ENCODE measurements at regions of chr20 and their contacts with region 1.

Region 1: GRCh38 chr20:45373353-45374100 is 4.6 kb downstream of the TP53TG5 start:
- DNase-seq: peak; percentile 84 to 95 (median 89)
- ATAC-seq: peak; percentile 89
- H3K4me3 ChIP-seq: peak overlapping the region; percentile 63
- H3K4me3 Mint-ChIP-seq: peak overlapping the region; percentile 90
- H3K27ac ChIP-seq: peak overlapping the region; percentile 62 to 73
- H3K27ac Mint-ChIP-seq: peak overlapping the region; percentile 96
- H3K4me1 ChIP-seq: peaks cover 32% of the 10 kb centered on the region
- H3K4me1 Mint-ChIP-seq: peaks cover 46% of the 10 kb centered on the region
- H3K27me3 ChIP-seq: no peaks in the 10 kb centered on the region
- H3K27me3 Mint-ChIP-seq: no peaks in the 10 kb centered on the region
- CTCF ChIP-seq: peak; percentile 86

Region 2: DNA sequence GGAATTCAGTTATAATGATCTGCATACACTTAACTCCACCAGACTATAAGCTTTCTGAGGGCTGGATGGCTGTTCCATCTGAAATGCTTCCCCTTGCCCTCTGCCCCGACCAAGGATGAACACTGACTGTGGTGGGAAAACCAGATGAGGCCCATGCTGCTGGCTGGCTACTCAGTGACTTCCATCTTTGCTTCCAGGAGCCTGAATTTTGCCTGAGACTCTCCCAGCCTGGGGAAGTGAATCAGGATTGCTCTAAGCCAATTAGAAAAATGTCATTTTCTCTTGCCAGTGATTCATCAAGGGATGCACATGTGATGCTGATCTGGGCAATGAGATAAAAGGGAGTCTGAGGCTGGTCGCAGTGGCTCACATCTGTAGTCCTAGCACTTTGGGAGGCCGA is 411.7 kb before region 1 on chr20:
- CTCF ChIA-PET with region 1: no interaction called
- POLR2A ChIA-PET with region 1: no interaction called
- intact Hi-C with region 1: no loop called
- DNase-seq: no peak
- ATAC-seq: no peak
- H3K4me3 ChIP-seq: no peak overlapping the region
- H3K4me3 Mint-ChIP-seq: peak overlapping the region; percentile 98
- H3K27ac ChIP-seq: no peak overlapping the region
- H3K27ac Mint-ChIP-seq: no peak overlapping the region
- H3K4me1 ChIP-seq: peaks cover 44% of the 10 kb centered on the region
- H3K4me1 Mint-ChIP-seq: peaks cover 59% of the 10 kb centered on the region
- H3K27me3 ChIP-seq: no peaks in the 10 kb centered on the region
- H3K27me3 Mint-ChIP-seq: no peaks in the 10 kb centered on the region
- CTCF ChIP-seq: no peak

Region 3: GRCh38 chr20:45362804-45363610 is 10.5 kb before region 1 on chr20 and contains the start of gene SYS1:
- CTCF ChIA-PET with region 1: interaction called, 89 read pairs
- POLR2A ChIA-PET with region 1: interaction called, 184 read pairs
- intact Hi-C with region 1: loop called in 1 of 2 experiments (anchors 1 kb)
- DNase-seq: peak; percentile 97 to 100 (median 99)
- ATAC-seq: peak; percentile 86
- H3K4me3 ChIP-seq: peak within 1 kb of the TSS; percentile 96
- H3K4me3 Mint-ChIP-seq: peak within 1 kb of the TSS; percentile 91
- H3K27ac ChIP-seq: peak within 1 kb of the TSS; percentile 98 to 99
- H3K27ac Mint-ChIP-seq: peak within 1 kb of the TSS; percentile 85
- H3K4me1 ChIP-seq: peaks cover 55% of the 10 kb centered on the region
- H3K4me1 Mint-ChIP-seq: peaks cover 46% of the 10 kb centered on the region
- H3K27me3 ChIP-seq: no peaks in the 10 kb centered on the region
- H3K27me3 Mint-ChIP-seq: no peaks in the 10 kb centered on the region
- CTCF ChIP-seq: peak; percentile 92
- total RNA-seq, gene SYS1: 94.8 to 107 TPM

Region 4: GRCh38 chr20:45415774-45416637 is 42.5 kb after region 1 on chr20 and contains the start of gene PIGT:
- CTCF ChIA-PET with region 1: interaction called, 51 read pairs
- POLR2A ChIA-PET with region 1: interaction called, 60 read pairs
- intact Hi-C with region 1: loop called (anchors 2 kb)
- DNase-seq: peak; percentile 75 to 97 (median 86)
- ATAC-seq: peak; percentile 95
- H3K4me3 ChIP-seq: peak within 1 kb of the TSS; percentile 98
- H3K4me3 Mint-ChIP-seq: peak within 1 kb of the TSS; percentile 95
- H3K27ac ChIP-seq: peak within 1 kb of the TSS; percentile 81 to 88
- H3K27ac Mint-ChIP-seq: peak within 1 kb of the TSS; percentile 92
- H3K4me1 ChIP-seq: peaks cover 31% of the 10 kb centered on the region
- H3K4me1 Mint-ChIP-seq: peaks cover 49% of the 10 kb centered on the region
- H3K27me3 ChIP-seq: no peaks in the 10 kb centered on the region
- H3K27me3 Mint-ChIP-seq: no peaks in the 10 kb centered on the region
- CTCF ChIP-seq: no peak
- total RNA-seq, gene PIGT: 157 to 163 TPM

Region 5: GRCh38 chr20:45436732-45437391 is 63.3 kb after region 1 on chr20:
- CTCF ChIA-PET with region 1: interaction called, 132 read pairs
- POLR2A ChIA-PET with region 1: interaction called, 89 read pairs
- intact Hi-C with region 1: loop called (anchors 1 kb)
- DNase-seq: peak; percentile 77 to 93 (median 84)
- ATAC-seq: peak; percentile 99
- H3K4me3 ChIP-seq: peak overlapping the region; percentile 54
- H3K4me3 Mint-ChIP-seq: peak overlapping the region; percentile 86
- H3K27ac ChIP-seq: no peak overlapping the region
- H3K27ac Mint-ChIP-seq: no peak overlapping the region
- H3K4me1 ChIP-seq: peaks cover 9% of the 10 kb centered on the region
- H3K4me1 Mint-ChIP-seq: peaks cover 7% of the 10 kb centered on the region
- H3K27me3 ChIP-seq: no peaks in the 10 kb centered on the region
- H3K27me3 Mint-ChIP-seq: no peaks in the 10 kb centered on the region
- CTCF ChIP-seq: peak; percentile 97

Region 6: DNA sequence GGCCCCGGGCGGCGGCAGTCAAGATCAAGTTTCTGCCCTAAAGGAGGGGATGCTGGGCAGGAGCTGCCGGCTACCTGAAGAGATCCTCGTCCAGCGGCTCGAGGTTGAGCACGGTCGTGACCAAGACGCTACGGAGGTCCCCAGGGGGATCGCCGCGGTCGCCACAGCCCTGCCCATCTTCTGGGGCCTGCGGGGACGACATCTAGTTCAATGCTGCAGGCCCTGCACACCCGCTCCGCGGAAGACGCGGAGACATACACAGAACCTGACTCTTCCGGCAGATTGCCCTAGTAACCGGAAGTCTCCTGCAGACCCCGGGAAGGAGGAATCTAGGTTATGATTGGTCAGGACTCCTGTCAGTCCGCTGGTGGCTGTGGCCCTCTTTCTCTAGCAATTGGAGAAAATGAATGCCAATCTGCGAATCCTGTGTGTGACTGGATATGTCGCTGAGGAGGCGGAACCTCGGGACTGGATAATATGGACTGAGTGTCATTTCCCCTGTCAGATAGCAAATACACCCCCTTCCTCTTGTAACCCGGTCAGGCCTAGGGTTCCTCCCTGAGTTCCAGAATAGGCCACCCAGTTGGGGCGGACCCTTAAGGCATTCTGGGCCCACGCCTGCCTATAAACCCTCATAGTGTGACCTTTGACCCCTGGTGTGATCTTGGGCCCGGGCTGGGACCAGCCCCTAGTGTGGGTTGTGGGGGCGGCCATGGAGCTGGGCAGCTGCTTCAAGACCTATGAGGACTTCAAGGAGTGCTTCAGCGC is 483.8 kb after region 1 on chr20 and contains the starts of genes ACOT8 and ZSWIM3:
- CTCF ChIA-PET with region 1: no interaction called
- POLR2A ChIA-PET with region 1: no interaction called
- intact Hi-C with region 1: loop called in 1 of 2 experiments (anchors 5 kb)
- DNase-seq: peak; percentile 80 to 100 (median 90)
- ATAC-seq: peak; percentile 98
- H3K4me3 ChIP-seq: peak within 1 kb of the TSS; percentile 100
- H3K4me3 Mint-ChIP-seq: peak within 1 kb of the TSS; percentile 96
- H3K27ac ChIP-seq: peak within 1 kb of the TSS; percentile 88 to 94
- H3K27ac Mint-ChIP-seq: peak within 1 kb of the TSS; percentile 98
- H3K4me1 ChIP-seq: peaks cover 40% of the 10 kb centered on the region
- H3K4me1 Mint-ChIP-seq: peaks cover 52% of the 10 kb centered on the region
- H3K27me3 ChIP-seq: no peaks in the 10 kb centered on the region
- H3K27me3 Mint-ChIP-seq: no peaks in the 10 kb centered on the region
- CTCF ChIP-seq: no peak
- total RNA-seq, gene ACOT8: 19.1 to 19.9 TPM
- total RNA-seq, gene ZSWIM3: 0.36 to 0.44 TPM

Measured in CD4-positive, alpha-beta T cell (primary cell).